PC-3 (cell line): ENCODE measurements at regions of chr21 and their contacts with region 1.

Region 1: DNA sequence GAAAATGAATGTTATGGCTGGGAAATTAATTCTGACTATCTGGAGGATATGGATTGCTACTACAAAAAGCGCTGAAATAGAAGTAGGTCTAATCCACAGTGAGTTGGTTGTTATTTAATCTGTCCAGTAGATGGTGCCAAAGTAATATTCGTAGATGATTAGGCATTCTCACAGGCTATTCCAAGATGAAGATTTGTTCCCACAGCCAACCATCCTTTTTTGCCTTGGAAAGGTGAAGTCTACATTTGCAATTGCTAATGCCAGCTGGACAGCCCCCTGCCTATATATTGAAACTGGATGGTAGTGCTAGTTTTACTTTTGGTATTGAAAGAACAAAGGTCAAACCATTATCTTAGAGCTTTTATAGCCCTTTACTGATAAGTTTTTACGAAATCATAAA is 43.8 kb downstream of the RBM11 start:
- DNase-seq: peak; percentile 72
- ATAC-seq: peak; percentile 82
- H3K4me3 ChIP-seq: no peak overlapping the region
- H3K27ac ChIP-seq: no peak overlapping the region
- H3K4me1 ChIP-seq: no peaks in the 10 kb centered on the region
- H3K27me3 ChIP-seq: 0 out of 2 replicates have a peak, but pooled peaks cover under 1% of the 10 kb centered on the region
- CTCF ChIP-seq: peak; percentile 75

Region 2: GRCh38 chr21:14414932-14415508 is 155.3 kb after region 1 on chr21:
- CTCF ChIA-PET with region 1: no interaction called
- POLR2A ChIA-PET with region 1: no interaction called
- intact Hi-C with region 1: no loop called
- DNase-seq: no peak
- ATAC-seq: no peak
- H3K4me3 ChIP-seq: no peak overlapping the region
- H3K27ac ChIP-seq: no peak overlapping the region
- H3K4me1 ChIP-seq: no peaks in the 10 kb centered on the region
- H3K27me3 ChIP-seq: 0 out of 2 replicates have a peak, but pooled peaks cover 3% of the 10 kb centered on the region
- CTCF ChIP-seq: no peak

Region 3: DNA sequence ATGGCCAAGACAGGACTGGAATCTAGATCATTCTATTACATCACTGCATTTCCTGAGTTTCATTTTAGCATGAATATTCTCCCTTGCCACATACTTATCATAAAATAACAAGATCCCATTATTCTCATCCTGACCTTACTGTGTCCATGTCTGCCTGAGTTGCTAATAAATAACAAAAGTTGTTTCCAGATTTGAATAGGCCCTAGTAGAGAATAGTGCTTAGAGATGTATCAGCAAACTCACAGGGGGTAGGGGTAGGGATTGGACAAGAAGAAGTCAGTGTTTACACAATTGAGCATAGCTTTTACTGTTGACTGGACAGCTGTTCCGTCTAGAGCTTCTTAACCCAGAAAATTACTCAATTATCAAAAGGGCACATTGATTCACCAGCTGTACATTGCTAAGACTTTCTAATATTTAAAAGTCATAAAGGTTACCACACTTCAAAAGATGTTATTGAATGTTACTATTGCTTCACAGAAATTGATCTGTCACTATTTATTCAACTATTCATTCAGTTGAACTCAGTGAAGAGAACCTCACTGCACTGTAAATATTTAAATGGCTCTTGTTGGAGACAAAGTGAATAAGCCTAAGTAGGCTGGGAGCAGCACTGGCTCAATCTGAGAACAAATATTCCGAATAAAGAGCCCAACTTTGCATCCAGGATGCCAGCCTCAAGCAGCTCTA is 683.2 kb after region 1 on chr21:
- CTCF ChIA-PET with region 1: no interaction called
- POLR2A ChIA-PET with region 1: interaction called, 13 read pairs
- intact Hi-C with region 1: no loop called
- DNase-seq: no peak
- ATAC-seq: peak; percentile 8
- H3K4me3 ChIP-seq: peak overlapping the region; percentile 9; the same call in 1 of the 2 replicates
- H3K27ac ChIP-seq: peak overlapping the region; percentile 71
- H3K4me1 ChIP-seq: peaks cover 38% of the 10 kb centered on the region
- H3K27me3 ChIP-seq: no peaks in the 10 kb centered on the region
- CTCF ChIP-seq: no peak

Region 4: GRCh38 chr21:14968821-14969220 is 709.1 kb after region 1 on chr21:
- CTCF ChIA-PET with region 1: no interaction called
- POLR2A ChIA-PET with region 1: no interaction called
- intact Hi-C with region 1: no loop called
- DNase-seq: no peak
- ATAC-seq: no peak
- H3K4me3 ChIP-seq: no peak overlapping the region
- H3K27ac ChIP-seq: no peak overlapping the region
- H3K4me1 ChIP-seq: peaks cover 26% of the 10 kb centered on the region
- H3K27me3 ChIP-seq: no peaks in the 10 kb centered on the region
- CTCF ChIP-seq: no peak